Heart left ventricle (tissue), 16 donors: ENCODE measurements at regions of chr16 and their contacts with region 1.

Region 1: GRCh38 chr16:73068541-73069401 is 20.8 kb upstream of the ZFHX3 start:
- DNase-seq: peak; percentile 78 to 90 (median 82)
- ATAC-seq: peak; percentile 74 to 88 (median 82)
- H3K4me3 ChIP-seq: peak overlapping the region in 3 of 12 donors; percentile 4 to 17 (median 6)
- H3K27ac ChIP-seq: peak overlapping the region; percentile 75 to 96 (median 89)
- H3K4me1 ChIP-seq: peaks cover 3 to 74% (median 60%) of the 10 kb centered on the region in 12 donors
- H3K27me3 ChIP-seq: peaks cover 0 to 30% (median 6%) of the 10 kb centered on the region in 9 donors
- CTCF ChIP-seq: no peak
- POLR2A ChIP-seq: no peak

Region 2: GRCh38 chr16:73131156-73131862 is 62.5 kb after region 1 on chr16:
- intact Hi-C with region 1: no loop called
- DNase-seq: no peak
- ATAC-seq: no peak
- H3K4me3 ChIP-seq: no peak overlapping the region
- H3K27ac ChIP-seq: peak overlapping the region in 1 of 12 donors; percentile 29
- H3K4me1 ChIP-seq: peaks cover 0 to 5% (median 0%) of the 10 kb centered on the region in 12 donors
- H3K27me3 ChIP-seq: no peaks in the 10 kb centered on the region
- CTCF ChIP-seq: no peak
- POLR2A ChIP-seq: no peak

Region 3: DNA sequence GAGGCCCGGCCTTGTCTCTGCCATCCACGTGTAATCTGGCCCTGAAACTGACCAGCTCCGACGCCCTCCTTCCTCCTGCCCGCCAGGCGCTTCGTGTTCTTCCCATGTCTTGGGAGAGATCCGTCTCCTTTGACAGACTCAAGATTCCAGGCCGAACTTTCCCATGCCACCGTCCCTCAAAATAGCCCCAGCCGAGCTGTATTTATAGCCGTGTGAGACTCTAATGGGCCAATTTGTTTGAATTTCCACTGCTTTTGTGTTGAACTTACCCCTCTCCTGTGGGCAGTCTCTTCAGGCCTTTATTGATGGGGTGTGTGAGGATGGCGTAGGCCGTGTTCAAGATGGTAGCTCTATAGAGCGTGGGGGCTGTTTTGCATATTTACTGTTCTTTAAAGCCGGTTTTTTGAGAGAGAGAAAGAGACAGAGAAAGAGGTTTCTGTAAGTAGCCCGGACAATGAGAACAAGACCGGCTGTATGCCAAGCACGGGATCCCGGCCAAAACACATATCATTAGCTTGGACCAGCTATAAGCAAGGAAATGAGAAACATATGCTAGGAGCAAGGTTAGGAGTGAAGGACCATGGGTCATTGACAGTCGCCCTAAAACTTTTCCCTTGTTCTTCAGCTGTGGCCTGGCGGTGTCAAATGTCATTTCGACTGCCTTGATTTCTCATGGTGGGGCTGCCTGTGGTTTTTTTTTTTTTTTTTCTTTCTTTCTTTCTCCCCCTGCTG is 103.6 kb after region 1 on chr16:
- intact Hi-C with region 1: loop called in 8 of 10 experiments (anchors 5 to 10 kb)
- DNase-seq: peak; percentile 77 to 88 (median 82)
- ATAC-seq: peak; percentile 57 to 81 (median 76)
- H3K4me3 ChIP-seq: peak overlapping the region in 1 of 12 donors; percentile 37
- H3K27ac ChIP-seq: peak overlapping the region; percentile 58 to 87 (median 73)
- H3K4me1 ChIP-seq: peaks cover 0 to 44% (median 14%) of the 10 kb centered on the region in 12 donors
- H3K27me3 ChIP-seq: no peaks in the 10 kb centered on the region
- CTCF ChIP-seq: peak in 8 of 12 donors; percentile 12 to 52 (median 40)
- POLR2A ChIP-seq: no peak

Region 4: DNA sequence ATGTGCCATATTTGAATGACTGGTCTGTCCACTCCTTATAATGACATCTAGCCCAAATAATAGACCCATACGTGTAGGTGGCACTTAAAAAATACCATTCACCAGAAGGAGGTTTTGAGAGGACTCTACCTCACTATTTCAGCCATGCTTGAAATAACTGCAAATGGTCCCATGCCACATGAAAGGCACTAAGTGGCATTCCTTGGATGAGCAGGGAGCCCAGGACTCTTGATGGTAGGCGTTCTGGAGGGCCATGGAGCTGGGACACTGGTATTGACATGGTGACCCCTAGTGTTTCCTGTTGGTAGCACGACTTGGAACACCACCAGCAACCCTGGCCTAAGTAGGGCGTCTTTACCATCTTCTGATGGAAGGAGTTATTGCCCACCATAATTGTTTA is 127.9 kb after region 1 on chr16:
- intact Hi-C with region 1: loop called in 1 of 10 experiments (anchors 5 kb)
- DNase-seq: peak in 4 of 5 donors; percentile 61 to 73 (median 68)
- ATAC-seq: peak; percentile 69 to 93 (median 90)
- H3K4me3 ChIP-seq: no peak overlapping the region
- H3K27ac ChIP-seq: no peak overlapping the region
- H3K4me1 ChIP-seq: no peaks in the 10 kb centered on the region
- H3K27me3 ChIP-seq: peaks cover 0 to 5% (median 0%) of the 10 kb centered on the region in 9 donors
- CTCF ChIP-seq: peak; percentile 51 to 78 (median 69)
- POLR2A ChIP-seq: no peak